Sigmoid colon (tissue), 7 donors: ENCODE measurements at regions of chr7 and their contacts with region 1.

Region 1: DNA sequence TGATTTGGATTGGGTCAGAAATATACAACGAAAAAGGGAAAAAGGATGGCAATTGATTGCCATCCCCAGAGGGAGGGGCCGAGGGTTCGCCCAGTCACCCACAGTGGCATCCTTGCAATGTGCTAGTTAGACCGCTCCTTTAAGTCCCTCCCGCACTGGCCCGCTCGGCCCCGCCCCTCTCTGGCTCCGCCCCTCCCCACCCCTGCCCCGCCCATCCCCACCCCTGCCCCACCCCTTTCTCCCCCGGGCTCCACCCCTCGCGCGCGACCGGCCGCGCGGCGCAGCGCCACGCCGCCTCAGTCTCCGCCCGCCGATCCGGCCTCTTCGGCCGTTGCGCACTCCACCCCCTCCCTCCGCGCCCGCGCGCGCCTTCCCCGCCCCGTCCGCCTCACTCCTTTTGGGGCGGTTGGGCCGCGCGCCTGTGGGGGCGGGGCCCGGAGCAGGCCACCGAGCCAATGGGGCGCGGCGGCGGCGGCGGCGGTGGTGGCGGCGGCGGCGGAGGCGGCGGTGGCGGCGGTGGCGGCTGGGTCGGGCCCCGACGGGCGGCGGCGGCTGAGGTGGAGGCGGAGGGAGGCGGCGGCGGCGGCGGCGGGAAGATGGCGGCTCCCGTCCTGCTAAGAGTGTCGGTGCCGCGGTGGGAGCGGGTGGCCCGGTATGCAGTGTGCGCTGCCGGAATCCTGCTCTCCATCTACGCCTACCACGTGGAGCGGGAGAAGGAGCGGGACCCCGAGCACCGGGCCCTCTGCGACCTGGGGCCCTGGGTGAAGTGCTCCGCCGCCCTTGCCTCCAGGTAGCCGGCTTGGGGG is at the start of gene VKORC1L1:
- DNase-seq: peak; percentile 97
- H3K4me3 ChIP-seq: peak within 1 kb of the TSS; percentile 87 to 99 (median 96)
- H3K27ac ChIP-seq: peak within 1 kb of the TSS; percentile 78 to 87 (median 85)
- H3K4me1 ChIP-seq: peaks cover 0 to 9% (median 5%) of the 10 kb centered on the region in 4 donors
- H3K27me3 ChIP-seq: no peaks in the 10 kb centered on the region
- CTCF ChIP-seq: no peak
- EP300 ChIP-seq: no peak
- POLR2A ChIP-seq: no peak
- total RNA-seq, gene VKORC1L1: 15.1 to 20.3 (median 15.8) TPM

Region 2: DNA sequence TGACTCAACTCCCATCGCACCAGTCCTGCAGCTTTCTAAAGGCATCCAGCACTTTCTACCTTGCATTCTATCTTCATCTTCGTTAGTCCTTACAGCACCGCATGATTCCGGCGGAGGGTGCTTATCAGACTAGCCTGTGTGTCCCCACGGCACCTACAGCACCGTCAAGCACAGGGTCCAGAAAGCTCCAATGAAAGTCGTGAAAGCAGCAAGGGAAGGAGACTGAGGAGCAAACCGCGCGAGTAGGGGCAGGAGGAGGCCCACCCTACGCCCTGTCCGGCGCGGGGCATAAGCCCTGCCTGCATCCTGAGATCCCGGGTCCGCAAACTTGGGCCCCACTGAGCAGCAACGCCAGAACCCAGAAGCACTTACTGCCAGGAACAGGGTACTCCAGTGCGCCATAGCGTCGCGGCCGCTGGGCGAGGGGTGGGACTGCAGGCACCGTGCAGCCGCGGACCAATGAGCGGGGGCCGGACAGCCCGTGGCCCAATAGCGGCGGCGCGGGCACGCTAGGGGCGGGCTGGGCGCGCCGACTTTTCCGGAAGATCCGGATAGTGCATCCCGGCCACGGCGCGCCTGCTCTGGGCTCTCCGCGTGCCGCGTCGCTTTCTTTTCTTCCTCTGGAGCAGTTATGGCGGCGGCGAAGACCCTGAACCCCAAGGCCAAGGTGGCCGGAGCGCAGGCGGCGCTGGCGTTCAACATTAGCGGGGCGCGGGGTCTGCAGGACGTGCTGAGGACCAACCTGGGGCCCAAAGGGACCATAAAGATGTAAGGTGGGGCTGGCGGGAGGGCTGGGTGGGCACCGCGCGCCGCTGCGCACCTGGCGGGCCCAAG is 122.3 kb before region 1 on chr7:
- intact Hi-C with region 1: loop called (anchors 5 kb)
- DNase-seq: peak; percentile 95
- H3K4me3 ChIP-seq: peak overlapping the region; percentile 84 to 100 (median 92)
- H3K27ac ChIP-seq: peak overlapping the region; percentile 94 to 100 (median 97)
- H3K4me1 ChIP-seq: peaks cover 0 to 66% (median 53%) of the 10 kb centered on the region in 4 donors
- H3K27me3 ChIP-seq: no peaks in the 10 kb centered on the region
- CTCF ChIP-seq: peak in 3 of 4 experiments; percentile 24 to 38 (median 32)
- EP300 ChIP-seq: no peak
- POLR2A ChIP-seq: peak; percentile 61 to 71

Region 3: DNA sequence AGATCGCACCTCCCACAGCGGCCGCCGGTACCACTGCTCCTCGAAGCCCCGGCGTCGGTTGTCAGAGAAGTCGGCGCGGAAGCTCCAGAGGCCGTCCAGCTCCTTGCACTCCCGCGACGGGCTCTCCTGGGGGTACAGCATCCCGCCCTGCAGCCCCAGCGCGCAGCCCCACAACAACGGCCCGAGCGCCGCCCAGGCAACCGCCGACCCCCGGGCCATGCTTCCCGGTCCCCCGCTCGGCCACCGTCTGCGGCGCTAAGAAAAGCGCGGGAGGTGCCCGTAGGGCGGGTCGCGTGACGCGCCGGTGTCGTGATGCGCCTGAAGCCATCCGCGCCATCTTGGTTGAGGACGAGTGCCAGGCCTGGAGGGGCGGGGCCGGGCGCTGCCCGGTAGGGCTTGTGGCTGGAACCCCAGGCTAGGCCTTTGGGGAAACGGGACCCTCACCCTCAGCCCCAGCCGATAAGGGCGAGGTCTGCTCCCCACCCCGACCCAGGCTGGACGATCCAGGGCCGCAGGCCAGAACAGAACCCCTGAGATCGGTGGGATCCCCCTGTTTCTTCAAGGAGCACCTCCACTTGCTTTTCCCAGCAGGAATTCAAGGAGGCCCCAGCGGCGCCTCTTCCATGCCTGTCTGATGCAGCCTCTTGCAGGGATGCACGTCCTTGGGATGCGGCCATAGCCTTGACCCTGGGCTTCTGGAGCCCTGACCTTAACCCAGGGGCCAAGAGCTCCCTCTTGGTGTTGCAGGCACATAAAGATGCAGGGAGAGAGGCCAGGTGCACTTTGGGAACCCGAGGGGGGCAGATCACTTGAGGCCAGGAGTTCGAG is 109.2 kb after region 1 on chr7 and contains the start of gene GUSB:
- intact Hi-C with region 1: loop called (anchors 10 kb)
- DNase-seq: peak; percentile 95
- H3K4me3 ChIP-seq: peak within 1 kb of the TSS; percentile 77 to 97 (median 86)
- H3K27ac ChIP-seq: peak within 1 kb of the TSS; percentile 77 to 88 (median 81)
- H3K4me1 ChIP-seq: peaks cover 0 to 25% (median 20%) of the 10 kb centered on the region in 4 donors
- H3K27me3 ChIP-seq: no peaks in the 10 kb centered on the region
- CTCF ChIP-seq: no peak
- EP300 ChIP-seq: peak in 1 of 4 donors; percentile 24
- POLR2A ChIP-seq: peak; percentile 59 to 71
- total RNA-seq, gene GUSB: 17.2 to 25.2 (median 20.6) TPM